Activated CD4-positive, alpha-beta memory T cell treated with anti-CD3 and anti-CD28 coated beads for 36 hours (primary cell): ENCODE measurements at regions of chr1 and their contacts with region 1.

Region 1: DNA sequence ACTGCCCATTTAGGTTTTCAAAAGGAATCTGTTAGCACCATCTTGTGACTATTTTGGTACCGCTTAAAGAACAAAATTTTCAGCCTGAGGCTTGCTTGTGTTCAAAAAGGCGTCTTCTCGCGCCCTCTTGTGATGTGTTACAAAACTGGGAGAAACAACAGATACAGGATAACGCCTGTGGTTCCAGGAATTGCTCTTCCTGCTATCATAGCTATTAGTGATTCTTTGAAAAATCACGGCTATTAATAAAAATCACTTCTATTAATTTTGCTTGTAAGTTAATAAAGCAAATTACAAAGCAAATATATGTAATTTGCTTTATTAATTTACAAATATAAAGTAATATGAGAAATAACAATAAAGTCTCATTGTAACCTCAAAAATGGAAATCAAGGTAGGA is 82.2 kb upstream of the ABCD3 start:
- DNase-seq: peak; percentile 23
- H3K4me3 Mint-ChIP-seq: no peak overlapping the region
- H3K27ac Mint-ChIP-seq: no peak overlapping the region
- H3K4me1 Mint-ChIP-seq: peaks cover 2% of the 10 kb centered on the region
- H3K27me3 Mint-ChIP-seq: peaks cover 10% of the 10 kb centered on the region

Region 2: GRCh38 chr1:94025383-94026340 is 310.3 kb before region 1 on chr1:
- CTCF ChIA-PET with region 1: interaction called, 21 read pairs
- POLR2A ChIA-PET with region 1: no interaction called
- intact Hi-C with region 1: no loop called
- DNase-seq: no peak
- H3K4me3 Mint-ChIP-seq: no peak overlapping the region
- H3K27ac Mint-ChIP-seq: no peak overlapping the region
- H3K4me1 Mint-ChIP-seq: no peaks in the 10 kb centered on the region
- H3K27me3 Mint-ChIP-seq: peaks cover 2% of the 10 kb centered on the region

Region 3: GRCh38 chr1:94045465-94046056 is 290.4 kb before region 1 on chr1:
- CTCF ChIA-PET with region 1: interaction called, 12 read pairs
- POLR2A ChIA-PET with region 1: no interaction called
- intact Hi-C with region 1: no loop called
- DNase-seq: peak; percentile 50
- H3K4me3 Mint-ChIP-seq: peak overlapping the region; percentile 41
- H3K27ac Mint-ChIP-seq: no peak overlapping the region
- H3K4me1 Mint-ChIP-seq: peaks cover 6% of the 10 kb centered on the region
- H3K27me3 Mint-ChIP-seq: peaks cover 13% of the 10 kb centered on the region

Region 4: GRCh38 chr1:94061513-94062443 is 274.2 kb before region 1 on chr1:
- CTCF ChIA-PET with region 1: interaction called, 6 read pairs
- POLR2A ChIA-PET with region 1: no interaction called
- intact Hi-C with region 1: loop called (anchors 1 kb)
- DNase-seq: peak; percentile 49
- H3K4me3 Mint-ChIP-seq: no peak overlapping the region
- H3K27ac Mint-ChIP-seq: no peak overlapping the region
- H3K4me1 Mint-ChIP-seq: no peaks in the 10 kb centered on the region
- H3K27me3 Mint-ChIP-seq: peaks cover 14% of the 10 kb centered on the region

Region 5: DNA sequence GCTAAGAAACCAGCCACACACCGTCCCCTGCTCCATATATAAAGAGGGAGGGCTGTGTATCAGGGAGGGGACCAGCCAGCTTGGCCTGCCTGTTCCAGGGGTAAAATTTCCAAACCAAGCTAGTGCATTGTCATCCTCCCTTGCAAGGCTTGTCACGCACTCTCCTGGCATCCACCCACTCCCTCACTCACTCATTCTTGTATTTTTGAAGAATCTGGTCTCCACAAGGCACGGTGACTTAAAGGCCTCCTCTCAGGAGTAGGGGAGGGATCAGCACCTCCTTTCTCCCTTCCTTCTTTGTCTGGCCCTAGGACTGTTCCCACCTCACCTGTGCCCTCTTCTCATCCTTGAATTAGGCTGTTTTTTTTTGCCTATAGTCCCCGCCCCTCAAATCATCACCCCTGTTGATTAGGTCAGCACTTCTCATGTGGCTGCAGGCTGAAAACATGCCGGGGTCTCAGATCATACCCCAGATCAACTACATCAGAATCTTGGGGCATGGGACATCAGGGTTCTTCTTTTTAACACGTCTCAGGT is 220.0 kb before region 1 on chr1:
- CTCF ChIA-PET with region 1: no interaction called
- POLR2A ChIA-PET with region 1: no interaction called
- intact Hi-C with region 1: no loop called
- DNase-seq: no peak
- H3K4me3 Mint-ChIP-seq: no peak overlapping the region
- H3K27ac Mint-ChIP-seq: no peak overlapping the region
- H3K4me1 Mint-ChIP-seq: no peaks in the 10 kb centered on the region
- H3K27me3 Mint-ChIP-seq: peaks cover 8% of the 10 kb centered on the region